Left cardiac atrium (tissue), 4 donors: ENCODE measurements at regions of chr21 and their contacts with region 1.

Region 1: GRCh38 chr21:42593007-42593806 is 60.2 kb upstream of the PDE9A start:
- DNase-seq: peak; percentile 73
- ATAC-seq: peak; percentile 91 to 93

Region 2: DNA sequence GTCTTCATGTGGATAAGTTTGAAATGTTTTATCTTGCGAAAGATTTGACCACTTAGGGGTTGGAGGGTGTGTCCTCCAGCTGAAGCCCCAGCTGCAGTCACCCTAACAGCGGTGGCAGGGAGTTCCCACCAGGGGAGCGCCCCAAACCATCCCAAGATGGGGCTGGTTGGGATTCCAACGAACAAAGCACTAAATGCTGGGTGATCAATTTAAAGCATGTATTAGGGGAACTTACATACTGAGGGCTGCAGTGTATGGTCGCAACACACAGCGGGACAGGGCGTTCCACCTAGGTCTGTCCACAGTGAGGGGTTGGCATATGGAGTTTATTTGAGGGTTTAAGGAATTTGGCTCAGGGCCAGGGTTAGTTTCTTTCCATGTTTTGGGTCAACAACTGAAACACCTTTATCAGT is 53.3 kb before region 1 on chr21:
- intact Hi-C with region 1: no loop called
- DNase-seq: peak; percentile 7
- ATAC-seq: no peak

Region 3: DNA sequence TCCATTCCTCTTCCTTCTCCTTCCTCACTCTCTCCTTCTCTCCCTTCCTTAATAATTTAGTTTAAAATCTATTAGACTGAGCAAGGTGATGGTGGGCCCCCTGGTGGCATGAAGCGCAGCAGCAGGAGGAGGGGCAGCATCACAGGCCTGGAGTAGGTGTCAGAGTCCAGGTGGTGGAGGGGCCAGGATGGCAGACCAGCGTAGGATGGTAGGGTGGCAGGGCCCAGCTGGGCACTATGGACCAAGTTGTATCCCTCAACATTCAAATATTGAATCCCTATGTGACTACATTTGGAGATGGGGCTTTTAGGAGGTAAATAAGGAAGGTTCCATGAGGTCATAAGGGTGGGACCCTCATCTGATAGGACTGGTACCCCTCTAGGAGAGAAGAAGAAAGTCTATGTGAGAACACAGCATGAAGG is 225.1 kb after region 1 on chr21:
- intact Hi-C with region 1: loop called (anchors 5 kb)
- DNase-seq: peak; percentile 63
- ATAC-seq: peak; percentile 73